HEK293 (cell line): ENCODE measurements at regions of chr15 and their contacts with region 1.

Region 1: GRCh38 chr15:83248151-83249029 is 36.1 kb downstream of the BNC1 start:
- H3K4me3 ChIP-seq: no peak overlapping the region
- H3K27ac ChIP-seq: no peak overlapping the region
- H3K4me1 ChIP-seq: no peaks in the 10 kb centered on the region
- CTCF ChIP-seq: peak; percentile 45

Region 2: DNA sequence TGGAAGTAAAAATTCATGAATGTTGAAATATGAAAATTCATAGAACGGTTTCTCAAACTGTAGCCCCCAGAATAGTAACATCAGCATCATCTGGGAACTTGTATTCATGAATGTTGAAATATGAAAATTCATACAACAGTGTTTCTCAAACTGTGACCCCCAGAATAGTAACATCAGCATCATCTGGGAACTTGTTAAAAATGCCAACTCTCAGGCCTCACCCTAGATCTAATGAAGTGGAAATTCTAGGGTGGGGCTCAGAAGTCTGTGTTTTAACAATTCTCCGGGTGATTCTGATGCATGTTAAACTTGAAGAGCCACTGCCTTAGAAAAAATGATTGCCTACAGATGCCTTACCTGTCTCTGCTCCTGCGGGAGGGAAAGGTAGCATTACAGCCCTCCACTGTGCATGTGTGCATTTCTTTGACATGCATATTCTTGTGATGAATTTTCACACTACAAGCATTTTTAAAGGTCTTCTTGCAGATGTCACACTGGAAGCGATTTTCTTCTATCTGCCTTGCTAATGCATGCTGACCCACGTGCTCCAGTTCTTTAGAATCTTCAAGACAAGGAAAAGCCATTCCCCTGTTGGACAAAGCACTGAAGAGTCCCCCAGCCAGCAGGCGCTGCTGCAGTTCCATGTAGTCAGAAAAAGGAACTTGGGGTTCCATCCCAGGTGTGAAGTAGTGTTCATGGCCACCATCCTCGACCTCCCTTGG is 14.4 kb after region 1 on chr15:
- CTCF ChIA-PET with region 1: interaction called, 14 read pairs
- POLR2A ChIA-PET with region 1: no interaction called
- H3K4me3 ChIP-seq: no peak overlapping the region
- H3K27ac ChIP-seq: no peak overlapping the region
- H3K4me1 ChIP-seq: no peaks in the 10 kb centered on the region
- CTCF ChIP-seq: no peak

Region 3: DNA sequence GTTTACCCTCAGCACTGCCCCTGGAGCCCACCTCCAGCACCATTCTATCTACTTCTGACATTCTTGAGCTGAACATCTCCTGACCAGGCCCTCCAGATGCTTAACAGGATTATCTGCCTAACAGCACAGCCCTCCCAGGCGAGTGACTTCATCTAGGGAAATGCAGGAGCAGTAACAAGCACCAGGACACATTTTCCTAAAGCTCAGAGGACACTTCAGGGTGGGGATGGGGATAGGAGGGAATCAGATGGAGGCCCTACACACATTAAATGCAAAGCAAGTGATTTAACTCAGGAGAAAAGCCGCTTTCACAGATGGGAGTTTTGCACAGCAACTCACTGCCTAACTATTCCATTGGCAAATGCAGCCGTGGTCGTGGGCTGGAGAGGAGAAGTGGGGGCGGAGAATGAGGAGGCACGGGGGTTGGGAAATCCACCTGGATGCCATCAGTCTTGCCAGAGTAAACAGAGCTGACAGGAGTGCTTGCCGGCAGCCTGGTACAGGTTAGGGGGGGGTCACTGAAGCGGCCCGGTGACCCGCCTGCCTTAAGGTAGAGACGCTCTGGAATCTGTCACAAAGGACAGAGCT is 57.4 kb after region 1 on chr15:
- CTCF ChIA-PET with region 1: interaction called, 13 read pairs
- POLR2A ChIA-PET with region 1: no interaction called
- H3K4me3 ChIP-seq: no peak overlapping the region
- H3K27ac ChIP-seq: no peak overlapping the region
- H3K4me1 ChIP-seq: peaks cover 4% of the 10 kb centered on the region; the same call in 1 of the 2 replicates
- CTCF ChIP-seq: no peak

Region 4: GRCh38 chr15:83380682-83381081 is 132.3 kb after region 1 on chr15:
- CTCF ChIA-PET with region 1: interaction called, 63 read pairs
- POLR2A ChIA-PET with region 1: no interaction called
- H3K4me3 ChIP-seq: no peak overlapping the region
- H3K27ac ChIP-seq: no peak overlapping the region
- H3K4me1 ChIP-seq: no peaks in the 10 kb centered on the region
- CTCF ChIP-seq: peak; percentile 78

Region 5: DNA sequence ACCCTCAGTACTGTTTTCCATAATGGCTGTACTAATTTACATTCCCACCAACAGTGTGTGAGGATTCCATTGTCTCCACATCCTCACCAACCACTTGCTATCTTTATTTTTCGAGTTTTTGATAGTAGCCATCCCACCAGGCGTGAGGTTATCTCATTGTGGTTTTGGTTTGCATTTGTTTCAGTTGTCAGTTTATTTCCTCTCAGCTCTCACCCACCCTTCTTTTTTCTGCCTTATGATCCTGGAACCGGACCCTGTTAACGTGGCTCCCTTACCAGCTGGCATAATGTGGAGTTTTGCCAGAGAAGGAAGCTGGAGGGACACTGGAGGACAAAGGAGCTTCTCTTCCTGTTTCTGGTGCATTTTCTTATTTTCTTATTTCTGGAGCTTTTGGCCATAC is 173.7 kb after region 1 on chr15:
- CTCF ChIA-PET with region 1: interaction called, 10 read pairs
- POLR2A ChIA-PET with region 1: no interaction called
- H3K4me3 ChIP-seq: no peak overlapping the region
- H3K27ac ChIP-seq: no peak overlapping the region
- H3K4me1 ChIP-seq: no peaks in the 10 kb centered on the region
- CTCF ChIP-seq: no peak

Region 6: GRCh38 chr15:83549623-83550022 is 301.2 kb after region 1 on chr15:
- CTCF ChIA-PET with region 1: interaction called, 10 read pairs
- POLR2A ChIA-PET with region 1: no interaction called
- H3K4me3 ChIP-seq: no peak overlapping the region
- H3K27ac ChIP-seq: no peak overlapping the region
- H3K4me1 ChIP-seq: no peaks in the 10 kb centered on the region
- CTCF ChIP-seq: no peak

Region 7: GRCh38 chr15:83571820-83572707 is 323.7 kb after region 1 on chr15:
- CTCF ChIA-PET with region 1: interaction called, 24 read pairs
- POLR2A ChIA-PET with region 1: no interaction called
- H3K4me3 ChIP-seq: no peak overlapping the region
- H3K27ac ChIP-seq: no peak overlapping the region
- H3K4me1 ChIP-seq: no peaks in the 10 kb centered on the region
- CTCF ChIP-seq: no peak